ENCODE measurements at regions of chr14 and their contacts with region 1.

Region 1: GRCh38 chr14:49687942-49688700 is at the start of gene POLE2:
- DNase-seq: peak; percentile 62
- H3K27ac ChIP-seq: peak within 1 kb of the TSS; percentile 79
- CTCF ChIP-seq: no peak

Region 2: DNA sequence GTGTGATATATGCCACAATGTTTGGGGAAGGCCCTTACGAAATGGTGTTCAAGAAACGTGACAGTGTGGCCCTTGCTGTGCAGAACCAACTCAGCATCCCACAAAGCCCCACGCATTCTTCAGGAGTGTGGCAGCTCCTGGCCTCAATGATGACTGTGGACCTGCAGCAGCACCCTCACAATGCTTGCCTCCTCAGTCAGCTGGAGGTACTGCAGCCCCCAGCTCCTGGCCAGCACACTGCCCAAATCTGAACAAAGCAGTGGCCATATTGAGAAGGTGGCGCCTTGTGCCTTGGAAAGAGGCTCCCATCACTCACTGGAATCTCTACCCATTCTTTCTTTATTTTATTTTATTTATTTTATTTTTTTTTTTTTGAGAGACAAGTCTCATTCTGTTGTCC is 10.5 kb before region 1 on chr14:
- CTCF ChIA-PET with region 1: no interaction called
- POLR2A ChIA-PET with region 1: no interaction called
- DNase-seq: no peak
- H3K27ac ChIP-seq: no peak overlapping the region
- CTCF ChIP-seq: no peak

Region 3: DNA sequence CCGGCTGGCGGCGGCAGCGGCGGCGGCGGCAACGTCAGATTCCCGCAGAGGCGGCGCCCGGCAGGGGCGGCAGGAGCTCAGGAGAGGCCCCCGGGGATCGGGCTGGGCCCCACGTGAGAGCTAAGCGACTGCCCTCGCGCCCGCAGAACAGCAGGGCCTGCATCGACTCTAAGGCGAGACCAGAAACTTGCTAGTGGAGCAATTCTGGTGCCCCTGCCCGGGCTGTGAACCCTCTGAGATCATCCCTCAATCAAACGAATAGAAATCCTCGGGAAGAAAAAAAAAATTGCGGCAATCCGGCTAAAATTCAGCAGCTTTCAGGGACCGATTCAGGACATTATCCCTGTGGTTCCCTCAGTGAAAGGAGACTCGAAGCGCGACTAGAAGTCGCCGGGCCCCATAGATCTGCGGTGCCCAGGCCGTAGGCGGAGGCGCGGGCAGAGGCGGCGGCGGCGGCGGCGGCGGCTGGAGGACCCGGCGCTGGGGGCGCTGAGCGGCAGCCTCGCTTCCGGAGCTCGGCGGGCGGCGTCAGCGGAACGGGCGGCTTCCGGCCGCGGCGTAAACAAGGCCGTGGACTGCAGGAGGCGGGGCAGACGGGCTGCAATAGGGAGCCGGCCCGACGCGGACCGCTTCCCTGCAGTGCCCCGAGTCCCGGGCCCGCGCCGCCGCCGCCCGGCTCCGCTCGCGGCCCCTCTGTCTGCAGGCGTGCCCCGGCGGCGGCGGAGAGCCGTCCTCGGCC is 79.6 kb after region 1 on chr14 and contains the start of gene KLHDC2:
- CTCF ChIA-PET with region 1: no interaction called
- POLR2A ChIA-PET with region 1: interaction called, 12 read pairs
- DNase-seq: peak; percentile 73
- H3K27ac ChIP-seq: peak within 1 kb of the TSS; percentile 97
- CTCF ChIP-seq: peak; percentile 85

Measured in RWPE1 (cell line).